ENCODE measurements at regions of chr5 and their contacts with region 1.

Region 1: DNA sequence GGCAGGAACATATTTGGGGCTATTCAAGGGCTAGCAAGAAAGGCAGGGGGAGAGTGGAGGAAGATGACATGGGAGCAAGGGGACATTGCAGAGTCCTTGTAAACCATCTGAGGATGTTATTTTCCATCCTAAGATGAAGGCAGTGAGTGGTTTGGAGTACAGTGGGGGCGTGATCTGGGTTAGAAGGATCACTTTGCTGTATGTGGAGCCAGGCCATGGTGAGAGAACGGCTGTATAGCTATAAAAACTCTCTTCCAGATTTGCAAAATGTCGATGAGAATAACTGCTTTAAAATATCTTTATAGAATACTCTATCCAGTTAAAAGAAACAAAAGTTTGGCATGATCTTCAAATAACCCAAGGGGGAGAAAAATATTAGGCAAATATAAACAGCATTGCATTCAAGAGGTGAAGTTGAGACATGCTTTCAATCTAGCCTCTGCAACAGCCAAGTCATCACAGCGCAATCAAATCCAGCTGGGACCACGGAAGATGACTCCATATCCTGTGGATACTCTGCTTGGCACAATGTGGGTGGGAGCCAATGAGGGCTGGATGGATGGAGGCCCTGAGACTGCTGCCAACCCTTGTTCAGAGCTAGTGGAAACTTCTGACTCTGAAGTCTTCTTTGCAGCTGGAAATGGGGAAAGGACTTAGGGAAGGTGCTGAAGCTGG is 111.5 kb upstream of the BASP1 start:
- DNase-seq: no peak
- H3K4me3 ChIP-seq: no peak overlapping the region
- CTCF ChIP-seq: no peak

Region 2: GRCh38 chr5:17079562-17079961 is 26.3 kb before region 1 on chr5:
- CTCF ChIA-PET with region 1: no interaction called
- POLR2A ChIA-PET with region 1: no interaction called
- DNase-seq: no peak
- H3K4me3 ChIP-seq: no peak overlapping the region
- CTCF ChIP-seq: no peak

Region 3: GRCh38 chr5:17089690-17090089 is 16.2 kb before region 1 on chr5:
- CTCF ChIA-PET with region 1: interaction called, 11 read pairs
- POLR2A ChIA-PET with region 1: no interaction called
- DNase-seq: no peak
- H3K4me3 ChIP-seq: no peak overlapping the region
- CTCF ChIP-seq: no peak

Measured in AG04449 (cell line).